Panc1 (cell line): ENCODE measurements at regions of chr5 and their contacts with region 1.

Region 1: DNA sequence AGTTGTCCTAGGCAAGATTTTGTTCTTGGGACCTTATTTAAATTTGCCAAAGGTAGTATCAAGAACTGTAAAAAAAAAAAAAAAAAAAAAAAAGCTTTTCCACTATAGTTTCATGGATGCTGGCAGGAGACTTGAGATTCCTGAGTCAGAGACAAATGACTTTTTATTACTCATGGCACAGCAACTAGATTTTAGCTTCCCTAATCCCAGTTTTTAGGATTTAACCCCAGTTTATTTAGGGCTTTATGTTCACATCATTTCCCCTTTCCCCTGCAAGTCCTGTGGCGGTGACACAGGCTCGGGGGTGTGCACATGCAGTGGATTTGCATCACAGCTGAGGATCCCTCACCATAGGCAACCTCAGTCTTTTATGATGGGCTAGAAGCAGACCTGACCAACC is 144.9 kb downstream of the GOLPH3 start:
- DNase-seq: no peak
- ATAC-seq: no peak
- H3K4me3 ChIP-seq: no peak overlapping the region
- H3K27ac ChIP-seq: no peak overlapping the region
- H3K4me1 ChIP-seq: no peaks in the 10 kb centered on the region
- H3K27me3 ChIP-seq: no peaks in the 10 kb centered on the region; the same call in none of the 2 replicates
- CTCF ChIP-seq: no peak

Region 2: GRCh38 chr5:31707329-31707728 is 321.9 kb before region 1 on chr5:
- CTCF ChIA-PET with region 1: no interaction called
- POLR2A ChIA-PET with region 1: no interaction called
- in situ Hi-C with region 1: no loop called
- intact Hi-C with region 1: no loop called
- DNase-seq: no peak
- ATAC-seq: no peak
- H3K4me3 ChIP-seq: no peak overlapping the region
- H3K27ac ChIP-seq: no peak overlapping the region
- H3K4me1 ChIP-seq: no peaks in the 10 kb centered on the region
- H3K27me3 ChIP-seq: no peaks in the 10 kb centered on the region; the same call in 1 of the 2 replicates
- CTCF ChIP-seq: no peak

Region 3: GRCh38 chr5:32044939-32045338 is 15.7 kb after region 1 on chr5:
- CTCF ChIA-PET with region 1: no interaction called
- POLR2A ChIA-PET with region 1: interaction called, 12 read pairs
- in situ Hi-C with region 1: no loop called
- intact Hi-C with region 1: no loop called
- DNase-seq: no peak
- ATAC-seq: no peak
- H3K4me3 ChIP-seq: no peak overlapping the region
- H3K27ac ChIP-seq: no peak overlapping the region
- H3K4me1 ChIP-seq: no peaks in the 10 kb centered on the region
- H3K27me3 ChIP-seq: 0 out of 2 replicates have a peak, but pooled peaks cover 6% of the 10 kb centered on the region
- CTCF ChIP-seq: no peak

Region 4: DNA sequence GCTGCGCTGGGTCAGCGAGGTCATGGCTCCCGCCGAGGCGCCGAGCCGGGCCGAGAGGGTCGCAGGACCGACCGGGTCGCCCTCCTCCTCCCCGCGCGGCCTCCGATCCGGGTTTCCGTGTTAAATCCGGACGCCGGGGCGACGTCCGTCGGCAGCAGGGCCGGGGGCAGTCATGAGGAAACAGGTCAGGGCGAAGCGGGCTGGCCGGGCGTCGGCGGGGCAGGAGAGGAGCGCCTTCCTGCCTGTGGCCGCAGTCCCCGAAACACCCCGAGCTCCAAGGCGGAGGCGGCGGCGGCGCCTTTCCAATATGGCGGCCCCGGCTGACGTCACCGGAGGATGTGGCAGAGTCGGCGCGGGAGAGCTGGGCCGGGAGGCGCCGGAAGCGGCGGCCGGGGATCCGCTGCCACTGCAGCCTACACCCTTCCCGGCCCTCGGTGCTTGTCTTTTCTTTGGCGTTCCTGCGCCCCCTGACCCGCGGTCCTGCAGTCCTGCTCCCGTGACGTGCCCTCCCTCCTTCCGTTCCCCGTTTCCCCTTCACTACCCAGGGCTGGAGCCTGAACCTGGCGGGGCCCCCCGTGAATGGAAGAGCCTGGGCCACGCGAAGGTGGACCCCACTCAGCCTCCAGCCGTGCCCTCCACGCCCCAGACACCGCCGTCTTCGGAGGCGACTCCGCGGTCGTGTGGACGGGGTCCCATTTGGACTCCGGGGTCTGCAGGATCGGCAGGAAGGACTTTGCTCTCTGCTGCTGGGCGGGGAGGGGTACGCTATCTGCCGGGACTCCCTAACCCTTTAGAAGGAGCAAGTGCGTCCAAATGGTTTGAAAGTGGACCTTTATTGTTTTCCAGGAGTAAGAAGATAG is 145.0 kb after region 1 on chr5 and contains the start of gene GOLPH3:
- CTCF ChIA-PET with region 1: no interaction called
- POLR2A ChIA-PET with region 1: no interaction called
- in situ Hi-C with region 1: no loop called
- intact Hi-C with region 1: no loop called
- DNase-seq: no peak
- ATAC-seq: peak; percentile 91
- H3K4me3 ChIP-seq: peak within 1 kb of the TSS; percentile 81 to 83
- H3K27ac ChIP-seq: peak within 1 kb of the TSS; percentile 96
- H3K4me1 ChIP-seq: peaks cover 23% of the 10 kb centered on the region
- H3K27me3 ChIP-seq: no peaks in the 10 kb centered on the region
- CTCF ChIP-seq: no peak
- total RNA-seq, gene GOLPH3: 89.7 TPM